ENCODE measurements at regions of chrX and their contacts with region 1.

Region 1: GRCh38 chrX:77875372-77875771 is 19.9 kb downstream of the MAGT1 start:
- H3K4me3 Mint-ChIP-seq: no peak overlapping the region
- H3K27ac Mint-ChIP-seq: no peak overlapping the region
- H3K4me1 Mint-ChIP-seq: no peaks in the 10 kb centered on the region
- H3K27me3 Mint-ChIP-seq: no peaks in the 10 kb centered on the region

Region 2: GRCh38 chrX:77689376-77689775 is 186.0 kb before region 1 on chrX:
- intact Hi-C with region 1: loop called (anchors 10 kb)
- H3K4me3 Mint-ChIP-seq: no peak overlapping the region
- H3K27ac Mint-ChIP-seq: no peak overlapping the region
- H3K4me1 Mint-ChIP-seq: peaks cover 6% of the 10 kb centered on the region
- H3K27me3 Mint-ChIP-seq: no peaks in the 10 kb centered on the region

Region 3: GRCh38 chrX:77899081-77899828 is 23.9 kb after region 1 on chrX and contains the start of gene COX7B:
- intact Hi-C with region 1: no loop called
- H3K4me3 Mint-ChIP-seq: peak within 1 kb of the TSS; percentile 83
- H3K27ac Mint-ChIP-seq: peak within 1 kb of the TSS; percentile 94
- H3K4me1 Mint-ChIP-seq: peaks cover 8% of the 10 kb centered on the region
- H3K27me3 Mint-ChIP-seq: no peaks in the 10 kb centered on the region

Measured in dendritic cell treated with granulocyte-macrophage colony-stimulating factor and Interleukin-4, amounts not matched to agents 40 ng/mL and 50 ng/mL, for 4 days (primary cell).